ENCODE measurements at regions of chr20 and their contacts with region 1.

Region 1: GRCh38 chr20:3679749-3680700 is 1.8 kb downstream of the ADAM33 start:
- DNase-seq: no peak
- H3K4me3 ChIP-seq: no peak overlapping the region
- H3K27ac ChIP-seq: peak overlapping the region in 2 of 3 donors; percentile 70 to 71
- H3K4me1 ChIP-seq: peaks cover 16 to 36% of the 10 kb centered on the region in 2 donors
- H3K27me3 ChIP-seq: no peaks in the 10 kb centered on the region
- CTCF ChIP-seq: no peak
- POLR2A ChIP-seq: no peak

Region 2: DNA sequence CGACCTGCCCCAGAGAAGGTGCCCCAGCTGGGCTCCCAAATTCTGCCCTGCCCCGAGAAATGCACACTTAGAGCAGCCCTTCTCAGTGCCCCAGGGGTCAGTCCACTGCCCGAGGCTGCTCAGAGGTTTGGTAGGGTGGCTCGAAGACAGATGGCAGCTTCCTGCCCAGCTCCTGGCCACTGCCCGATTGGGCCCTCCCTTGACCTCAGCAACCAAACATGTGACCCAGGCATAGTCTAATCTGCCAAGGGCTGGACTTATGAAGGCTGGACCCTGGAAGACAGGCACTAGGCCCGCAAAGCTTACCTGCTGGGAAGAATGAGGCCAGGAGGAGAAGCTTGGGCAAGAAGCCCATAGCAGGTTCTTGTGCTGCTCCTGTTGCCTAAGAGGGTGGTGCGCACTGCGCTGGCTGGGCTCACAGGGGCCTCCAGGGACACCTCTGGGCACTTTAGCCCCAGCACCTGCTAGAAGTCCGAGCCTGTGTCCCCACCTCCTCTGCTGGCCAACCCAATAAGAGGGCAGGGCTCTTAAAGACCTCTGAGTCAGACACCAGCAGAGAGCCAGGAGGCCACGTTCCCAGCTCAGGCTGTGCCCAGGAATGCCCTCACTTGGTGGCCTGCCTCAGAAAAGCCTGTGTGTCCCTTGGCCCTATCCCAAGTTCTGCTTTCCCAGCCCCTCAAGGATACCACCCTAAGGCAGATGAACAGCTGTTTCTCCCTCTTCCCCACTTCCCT is 26.9 kb after region 1 on chr20:
- intact Hi-C with region 1: loop called (anchors 2 kb)
- DNase-seq: peak; percentile 58 to 68
- H3K4me3 ChIP-seq: no peak overlapping the region
- H3K27ac ChIP-seq: no peak overlapping the region
- H3K4me1 ChIP-seq: peaks cover 0 to 12% of the 10 kb centered on the region in 2 donors
- H3K27me3 ChIP-seq: no peaks in the 10 kb centered on the region
- CTCF ChIP-seq: no peak
- POLR2A ChIP-seq: no peak

Region 3: GRCh38 chr20:4082406-4083097 is 402.5 kb after region 1 on chr20:
- intact Hi-C with region 1: loop called (anchors 10 kb)
- DNase-seq: peak; percentile 33 to 47
- H3K4me3 ChIP-seq: no peak overlapping the region
- H3K27ac ChIP-seq: peak overlapping the region; percentile 19 to 69 (median 35)
- H3K4me1 ChIP-seq: peaks cover 0 to 27% of the 10 kb centered on the region in 2 donors
- H3K27me3 ChIP-seq: no peaks in the 10 kb centered on the region
- CTCF ChIP-seq: no peak
- POLR2A ChIP-seq: no peak

Measured in thyroid gland (tissue), 4 donors.